GM13977 (cell line): ENCODE measurements at regions of chr7 and their contacts with region 1.

Region 1: GRCh38 chr7:136009488-136010079 is 32.4 kb upstream of the MTPN start:
- DNase-seq: peak; percentile 28
- CTCF ChIP-seq: peak; percentile 52

Region 2: DNA sequence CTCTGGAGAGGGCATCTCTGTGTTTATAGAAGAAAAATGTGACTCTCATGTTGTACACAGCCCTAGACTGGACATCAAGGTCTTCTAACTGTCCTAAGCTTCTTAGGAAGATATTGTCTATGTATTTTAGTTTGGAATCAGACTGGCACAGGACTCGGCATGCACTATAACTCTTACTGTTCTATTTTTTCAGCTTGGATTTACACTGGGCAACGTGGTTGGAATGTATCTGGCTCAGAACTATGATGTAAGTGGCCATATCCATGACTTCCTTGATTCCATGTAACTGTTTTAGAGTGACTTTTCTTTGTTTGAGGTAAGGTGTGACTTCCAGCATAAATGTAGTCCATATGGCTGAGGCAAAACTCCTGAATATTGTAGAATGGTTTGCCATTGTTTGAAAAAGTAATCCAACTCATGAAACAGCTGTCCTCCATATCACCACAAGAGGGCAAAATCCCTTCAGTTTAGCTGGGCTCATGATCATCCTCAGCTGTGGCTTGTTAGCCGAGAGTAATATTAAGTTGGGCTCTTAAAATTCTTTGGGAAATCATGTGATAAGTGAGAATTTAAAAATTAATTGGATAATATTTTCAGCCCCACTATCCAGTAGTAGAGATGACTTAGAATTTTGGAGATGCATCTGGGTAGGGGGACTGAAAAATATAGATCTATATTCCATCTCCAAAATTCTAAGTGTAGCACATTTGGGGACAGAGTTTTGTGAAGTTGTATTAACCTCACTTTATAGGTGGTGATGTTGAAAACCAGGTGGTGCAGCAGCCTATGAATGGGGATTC is 336.8 kb before region 1 on chr7:
- in situ Hi-C with region 1: loop called (anchors 10 kb)
- DNase-seq: peak; percentile 51
- CTCF ChIP-seq: peak; percentile 65

Region 3: DNA sequence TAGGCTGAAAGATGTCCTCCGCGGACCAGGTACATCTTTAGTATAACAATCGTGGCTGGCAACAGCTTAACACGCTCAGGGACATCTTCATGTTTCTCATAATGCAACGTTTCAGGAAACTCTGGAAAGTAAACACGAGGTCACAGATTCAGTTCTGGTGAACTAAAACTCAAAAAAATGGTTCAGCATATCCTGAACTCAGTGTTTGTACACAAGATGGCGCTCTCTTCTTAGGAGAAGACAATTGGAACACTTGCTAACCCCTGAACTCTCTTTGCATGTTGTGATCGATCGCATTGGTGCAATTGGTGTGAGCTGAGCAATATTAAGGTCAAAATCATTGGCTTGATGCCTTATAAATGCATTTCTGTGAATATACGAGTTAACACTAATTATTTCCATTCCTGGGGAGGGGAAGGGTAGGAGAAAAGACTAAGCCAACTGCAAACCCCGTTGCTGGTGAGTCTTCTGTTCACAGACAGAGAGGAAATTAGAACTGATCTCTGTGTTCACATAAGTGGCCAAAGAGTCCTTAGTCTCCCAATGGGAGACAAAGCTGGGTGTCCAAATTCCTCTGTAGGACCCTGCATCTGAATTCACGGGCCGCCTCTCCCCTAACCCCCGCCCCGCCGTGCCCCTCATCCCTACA is 208.4 kb before region 1 on chr7:
- in situ Hi-C with region 1: loop called (anchors 5 kb)
- DNase-seq: peak; percentile 72
- CTCF ChIP-seq: peak; percentile 80

Region 4: GRCh38 chr7:136677471-136678365 is 668.1 kb after region 1 on chr7:
- in situ Hi-C with region 1: no loop called
- DNase-seq: no peak
- CTCF ChIP-seq: no peak